ENCODE measurements at regions of chr5 and their contacts with region 1.

Region 1: GRCh38 chr5:15827741-15828140 is 327.8 kb downstream of the FBXL7 start:
- DNase-seq: no peak
- ATAC-seq: no peak
- H3K4me3 ChIP-seq: no peak overlapping the region
- H3K27ac ChIP-seq: no peak overlapping the region
- H3K4me1 ChIP-seq: peaks cover 0 to 28% (median 15%) of the 10 kb centered on the region in 12 donors
- H3K27me3 ChIP-seq: no peaks in the 10 kb centered on the region
- CTCF ChIP-seq: no peak
- POLR2A ChIP-seq: no peak

Region 2: GRCh38 chr5:15105796-15106393 is 721.8 kb before region 1 on chr5:
- intact Hi-C with region 1: loop called in 2 of 10 experiments (anchors 5 to 10 kb)
- DNase-seq: peak in 3 of 5 donors; percentile 18 to 28 (median 21)
- ATAC-seq: peak in 3 of 4 donors; percentile 66 to 77 (median 69)
- H3K4me3 ChIP-seq: no peak overlapping the region
- H3K27ac ChIP-seq: no peak overlapping the region
- H3K4me1 ChIP-seq: peaks cover 0 to 3% (median 0%) of the 10 kb centered on the region in 12 donors
- H3K27me3 ChIP-seq: no peaks in the 10 kb centered on the region
- CTCF ChIP-seq: peak; percentile 50 to 82 (median 68)
- POLR2A ChIP-seq: no peak

Region 3: DNA sequence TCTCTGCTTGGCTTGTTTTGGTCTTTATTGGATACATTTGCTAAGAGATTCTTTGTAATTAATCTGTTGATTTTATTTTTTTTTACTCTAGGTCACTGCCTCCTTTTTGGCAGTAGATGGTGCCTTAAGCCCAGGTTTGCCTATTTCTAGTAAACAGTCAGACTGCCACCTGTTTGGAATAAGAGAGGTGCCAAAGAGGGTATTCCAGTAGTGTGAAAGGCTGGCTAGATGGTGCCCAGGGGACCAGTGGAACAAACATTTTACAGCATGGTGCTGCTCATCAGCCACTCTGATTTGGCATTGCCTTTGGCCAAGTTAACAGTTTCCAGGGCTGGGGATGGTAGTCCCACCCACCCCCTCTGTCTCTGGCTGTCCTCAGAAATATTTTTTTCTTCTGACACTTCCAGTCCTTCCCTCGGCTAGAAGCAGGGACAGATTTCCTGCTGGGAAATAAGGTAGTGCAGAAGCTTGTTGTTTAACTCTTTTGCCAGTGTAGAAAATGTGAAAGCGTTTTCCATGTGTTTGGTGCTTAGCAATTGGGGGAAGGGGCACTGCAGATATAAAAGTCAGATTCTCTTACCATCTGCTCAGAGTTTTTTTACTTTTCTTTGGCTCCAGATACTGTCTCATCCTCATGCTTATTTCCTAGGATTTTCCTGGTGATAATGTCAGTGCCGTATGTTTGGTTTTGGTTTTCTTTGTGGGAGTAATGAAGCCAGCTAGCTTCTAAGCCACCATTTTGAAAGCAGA is 364.3 kb before region 1 on chr5:
- intact Hi-C with region 1: loop called in 3 of 10 experiments (anchors 5 kb)
- DNase-seq: no peak
- ATAC-seq: no peak
- H3K4me3 ChIP-seq: no peak overlapping the region
- H3K27ac ChIP-seq: no peak overlapping the region
- H3K4me1 ChIP-seq: no peaks in the 10 kb centered on the region
- H3K27me3 ChIP-seq: no peaks in the 10 kb centered on the region
- CTCF ChIP-seq: peak in 11 of 12 donors; percentile 13 to 58 (median 52)
- POLR2A ChIP-seq: no peak

Measured in heart left ventricle (tissue), 16 donors.